ENCODE measurements at regions of chr22 and their contacts with region 1.

Region 1: DNA sequence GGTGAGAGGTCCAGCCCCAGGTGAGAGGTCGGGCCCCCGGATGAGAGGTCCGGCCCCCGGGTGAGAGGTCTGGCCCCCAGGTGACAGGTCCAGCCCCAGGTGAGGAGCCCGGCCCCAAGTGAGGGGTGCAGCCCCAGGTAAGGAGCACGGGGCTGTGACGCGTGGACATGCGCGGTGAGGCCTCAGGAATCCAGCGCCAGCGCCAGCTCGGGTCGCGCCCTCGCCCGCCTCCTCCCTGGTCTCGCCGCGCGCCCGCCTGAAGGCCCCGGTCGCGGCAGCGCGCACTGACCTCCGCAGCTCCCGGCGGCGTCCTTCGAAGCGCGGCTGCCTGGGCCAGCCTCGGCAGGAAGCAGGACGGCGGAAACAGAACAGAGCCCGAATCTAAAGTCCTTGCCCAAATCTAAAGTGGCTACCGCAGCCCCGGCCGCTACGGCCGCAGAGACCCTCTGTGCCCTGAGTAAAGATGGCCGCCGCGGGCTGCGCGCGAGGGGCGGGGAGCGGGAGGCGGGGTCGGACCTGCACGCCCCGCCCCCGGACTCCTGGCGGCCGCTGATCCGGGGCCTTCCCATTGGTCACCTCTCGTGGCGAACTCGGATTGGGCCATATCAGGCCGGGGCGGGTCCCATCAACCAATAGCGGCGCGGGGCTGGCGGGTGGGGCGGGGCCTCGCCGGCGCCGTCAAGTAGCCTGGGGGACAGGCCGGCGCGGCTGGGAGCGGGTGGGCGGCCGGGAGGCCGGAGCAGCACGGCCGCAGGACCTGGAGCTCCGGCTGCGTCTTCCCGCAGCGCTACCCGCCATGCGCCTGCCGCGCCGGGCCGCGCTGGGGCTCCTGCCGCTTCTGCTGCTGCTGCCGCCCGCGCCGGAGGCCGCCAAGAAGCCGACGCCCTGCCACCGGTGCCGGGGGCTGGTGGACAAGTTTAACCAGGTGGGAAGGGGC is at the starts of genes ALG12 and CRELD2:
- DNase-seq: peak; percentile 99
- ATAC-seq: peak; percentile 99
- H3K4me3 Mint-ChIP-seq: peak within 1 kb of the TSS; percentile 79
- H3K27ac Mint-ChIP-seq: peak within 1 kb of the TSS; percentile 63
- H3K4me1 Mint-ChIP-seq: peaks cover 18% of the 10 kb centered on the region
- H3K27me3 Mint-ChIP-seq: no peaks in the 10 kb centered on the region
- total RNA-seq, gene ALG12: 13.6 to 13.7 TPM
- total RNA-seq, gene CRELD2: 15.2 to 16.4 TPM

Region 2: GRCh38 chr22:49657275-49657975 is 260.8 kb before region 1 on chr22:
- CTCF ChIA-PET with region 1: no interaction called
- POLR2A ChIA-PET with region 1: no interaction called
- intact Hi-C with region 1: loop called in 1 of 2 experiments (anchors 1 kb)
- DNase-seq: peak; percentile 89
- ATAC-seq: peak; percentile 90
- H3K4me3 Mint-ChIP-seq: peak overlapping the region; percentile 92
- H3K27ac Mint-ChIP-seq: peak overlapping the region; percentile 81
- H3K4me1 Mint-ChIP-seq: peaks cover 39% of the 10 kb centered on the region
- H3K27me3 Mint-ChIP-seq: no peaks in the 10 kb centered on the region

Region 3: GRCh38 chr22:49827853-49828598 is 90.2 kb before region 1 on chr22 and contains the start of gene BRD1:
- CTCF ChIA-PET with region 1: no interaction called
- POLR2A ChIA-PET with region 1: interaction called, 4 read pairs
- intact Hi-C with region 1: loop called (anchors 1 to 2 kb)
- DNase-seq: peak; percentile 73
- ATAC-seq: peak; percentile 68
- H3K4me3 Mint-ChIP-seq: peak within 1 kb of the TSS; percentile 88
- H3K27ac Mint-ChIP-seq: peak within 1 kb of the TSS; percentile 92
- H3K4me1 Mint-ChIP-seq: peaks cover 40% of the 10 kb centered on the region
- H3K27me3 Mint-ChIP-seq: no peaks in the 10 kb centered on the region
- total RNA-seq, gene BRD1: 22.1 to 23.6 TPM

Region 4: GRCh38 chr22:49852898-49853894 is 65.0 kb before region 1 on chr22 and contains the start of gene ZBED4:
- CTCF ChIA-PET with region 1: no interaction called
- POLR2A ChIA-PET with region 1: no interaction called
- intact Hi-C with region 1: loop called (anchors 1 kb)
- DNase-seq: peak; percentile 99
- ATAC-seq: peak; percentile 88
- H3K4me3 Mint-ChIP-seq: peak within 1 kb of the TSS; percentile 96
- H3K27ac Mint-ChIP-seq: peak within 1 kb of the TSS; percentile 87
- H3K4me1 Mint-ChIP-seq: peaks cover 36% of the 10 kb centered on the region
- H3K27me3 Mint-ChIP-seq: peaks cover 8% of the 10 kb centered on the region
- total RNA-seq, gene ZBED4: 17.3 to 17.4 TPM

Region 5: GRCh38 chr22:49999063-49999945 is 81.1 kb after region 1 on chr22:
- CTCF ChIA-PET with region 1: interaction called, 3 read pairs
- POLR2A ChIA-PET with region 1: no interaction called
- intact Hi-C with region 1: loop called in 1 of 2 experiments (anchors 1 kb)
- DNase-seq: peak; percentile 70
- ATAC-seq: peak; percentile 52
- H3K4me3 Mint-ChIP-seq: no peak overlapping the region
- H3K27ac Mint-ChIP-seq: no peak overlapping the region
- H3K4me1 Mint-ChIP-seq: peaks cover 7% of the 10 kb centered on the region
- H3K27me3 Mint-ChIP-seq: peaks cover 4% of the 10 kb centered on the region